PC-9 (cell line): ENCODE measurements at regions of chr17 and their contacts with region 1.

Region 1: DNA sequence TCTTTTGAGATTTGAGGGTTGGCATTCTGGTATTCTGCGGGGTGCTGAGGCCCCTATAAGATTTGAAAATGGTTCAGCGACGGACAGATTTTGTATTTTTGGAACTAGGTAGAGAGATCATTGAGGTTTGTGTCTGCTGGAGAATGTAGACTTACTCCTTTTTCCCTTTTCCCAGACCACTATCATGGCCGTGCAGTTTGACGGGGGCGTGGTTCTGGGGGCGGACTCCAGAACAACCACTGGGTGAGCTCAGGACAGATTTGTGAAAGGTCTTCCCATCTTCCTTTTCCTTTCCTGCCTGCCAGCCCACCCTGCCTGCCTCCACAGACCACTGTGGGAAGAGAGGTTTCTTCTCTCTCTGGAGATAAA is 573 bp downstream of the PSMB6 start:
- DNase-seq: peak in 1 of 2 experiments; percentile 41
- H3K4me3 ChIP-seq: peak overlapping the region; percentile 82
- H3K27ac ChIP-seq: peak overlapping the region; percentile 33
- H3K4me1 ChIP-seq: 0 out of 2 replicates have a peak, but pooled peaks cover 6% of the 10 kb centered on the region
- H3K27me3 ChIP-seq: no peaks in the 10 kb centered on the region
- CTCF ChIP-seq: no peak

Region 2: GRCh38 chr17:4849011-4849536 is 52.5 kb after region 1 on chr17:
- CTCF ChIA-PET with region 1: no interaction called
- POLR2A ChIA-PET with region 1: no interaction called
- intact Hi-C with region 1: loop called (anchors 5 kb)
- DNase-seq: peak; percentile 92 to 99
- H3K4me3 ChIP-seq: peak overlapping the region; percentile 32; the same call in 1 of the 2 replicates
- H3K27ac ChIP-seq: peak overlapping the region; percentile 94
- H3K4me1 ChIP-seq: peaks cover 63% of the 10 kb centered on the region
- H3K27me3 ChIP-seq: no peaks in the 10 kb centered on the region
- CTCF ChIP-seq: no peak

Region 3: GRCh38 chr17:4858882-4859260 is 62.3 kb after region 1 on chr17:
- CTCF ChIA-PET with region 1: no interaction called
- POLR2A ChIA-PET with region 1: interaction called, 5 read pairs
- intact Hi-C with region 1: loop called (anchors 2 kb)
- DNase-seq: peak; percentile 59 to 84
- H3K4me3 ChIP-seq: no peak overlapping the region
- H3K27ac ChIP-seq: peak overlapping the region; percentile 37
- H3K4me1 ChIP-seq: peaks cover 20% of the 10 kb centered on the region
- H3K27me3 ChIP-seq: no peaks in the 10 kb centered on the region
- CTCF ChIP-seq: no peak